ENCODE measurements at regions of chr20 and their contacts with region 1.

Region 1: GRCh38 chr20:4108495-4109306 is 93.3 kb upstream of the RNF24 start:
- DNase-seq: peak; percentile 79
- H3K4me3 ChIP-seq: no peak overlapping the region
- H3K27ac ChIP-seq: no peak overlapping the region
- H3K4me1 ChIP-seq: peaks cover 6% of the 10 kb centered on the region
- H3K27me3 ChIP-seq: peaks cover 0 to 2% of the 10 kb centered on the region in 2 experiments
- CTCF ChIP-seq: peak; percentile 95 to 97
- POLR2A ChIP-seq: no peak

Region 2: DNA sequence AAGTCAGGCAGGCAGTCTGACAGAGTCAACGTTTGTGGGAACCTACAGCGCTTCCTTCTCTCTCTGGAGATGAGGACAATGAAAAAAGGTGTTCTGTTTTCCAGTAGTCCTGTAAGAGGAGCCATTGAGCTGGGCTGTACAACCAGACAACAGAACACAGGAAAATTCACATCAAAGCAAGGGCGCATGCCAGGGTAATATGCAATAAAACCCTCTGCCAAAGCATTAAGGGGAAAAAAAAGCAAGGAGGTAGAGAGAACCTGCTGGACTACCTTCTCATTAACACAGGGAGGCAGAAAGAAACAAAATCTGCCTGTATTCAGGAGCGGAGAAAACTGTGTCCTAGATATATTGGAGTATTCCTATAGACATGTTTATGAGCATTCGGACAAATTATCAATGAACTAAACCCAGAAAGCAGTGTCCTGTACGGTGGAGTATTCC is 94.6 kb before region 1 on chr20:
- CTCF ChIA-PET with region 1: no interaction called
- POLR2A ChIA-PET with region 1: no interaction called
- dilution Hi-C with region 1: no loop called
- intact Hi-C with region 1: no loop called
- DNase-seq: peak; percentile 77
- H3K4me3 ChIP-seq: peak overlapping the region in 1 of 3 experiments; percentile 68
- H3K27ac ChIP-seq: no peak overlapping the region
- H3K4me1 ChIP-seq: peaks cover 10% of the 10 kb centered on the region
- H3K27me3 ChIP-seq: no peaks in the 10 kb centered on the region
- CTCF ChIP-seq: peak; percentile 46 to 53
- POLR2A ChIP-seq: no peak

Region 3: GRCh38 chr20:4195499-4195898 is 86.8 kb after region 1 on chr20:
- CTCF ChIA-PET with region 1: interaction called, 21 read pairs
- POLR2A ChIA-PET with region 1: no interaction called
- dilution Hi-C with region 1: no loop called
- intact Hi-C with region 1: loop called (anchors 1 kb)
- DNase-seq: peak; percentile 26
- H3K4me3 ChIP-seq: no peak overlapping the region
- H3K27ac ChIP-seq: no peak overlapping the region
- H3K4me1 ChIP-seq: peaks cover 3% of the 10 kb centered on the region
- H3K27me3 ChIP-seq: no peaks in the 10 kb centered on the region
- CTCF ChIP-seq: peak; percentile 37 to 52
- POLR2A ChIP-seq: no peak

Measured in endothelial cell of umbilical vein (primary cell).